Uterus (tissue), 4 donors: ENCODE measurements at regions of chr22 and their contacts with region 1.

Region 1: DNA sequence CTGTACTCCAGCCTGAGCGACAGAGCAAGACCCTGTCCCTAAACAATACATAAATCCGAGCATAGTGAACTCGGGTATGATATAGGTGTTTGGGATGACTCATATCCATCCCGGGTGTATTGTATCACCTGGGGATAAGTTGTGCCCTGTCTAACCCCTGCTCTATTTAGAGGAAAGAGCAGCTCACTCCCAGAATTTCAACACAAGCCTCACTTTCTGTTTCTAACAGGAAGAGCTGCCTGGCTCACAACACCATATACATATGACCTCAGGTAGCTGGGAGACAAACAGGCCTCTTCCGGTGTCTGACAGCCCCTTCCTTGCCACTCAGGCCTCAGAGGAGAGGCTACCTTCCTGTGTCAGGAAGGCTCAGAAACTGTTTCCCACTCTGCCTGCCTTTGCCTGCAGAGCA is 9.9 kb upstream of the MICALL1 start:
- DNase-seq: no peak
- H3K4me3 ChIP-seq: no peak overlapping the region
- H3K27ac ChIP-seq: peak overlapping the region; percentile 71 to 74
- H3K4me1 ChIP-seq: peaks cover 6 to 8% of the 10 kb centered on the region in 2 donors
- H3K27me3 ChIP-seq: no peaks in the 10 kb centered on the region
- CTCF ChIP-seq: no peak
- POLR2A ChIP-seq: no peak

Region 2: GRCh38 chr22:37862570-37863325 is 33.4 kb before region 1 on chr22:
- intact Hi-C with region 1: no loop called
- DNase-seq: no peak
- H3K4me3 ChIP-seq: no peak overlapping the region
- H3K27ac ChIP-seq: no peak overlapping the region
- H3K4me1 ChIP-seq: no peaks in the 10 kb centered on the region
- H3K27me3 ChIP-seq: no peaks in the 10 kb centered on the region
- CTCF ChIP-seq: no peak
- POLR2A ChIP-seq: no peak

Region 3: GRCh38 chr22:37933711-37934376 is 37.7 kb after region 1 on chr22:
- intact Hi-C with region 1: loop called (anchors 5 kb)
- DNase-seq: peak; percentile 86 to 90
- H3K4me3 ChIP-seq: no peak overlapping the region
- H3K27ac ChIP-seq: peak overlapping the region; percentile 60 to 68
- H3K4me1 ChIP-seq: peaks cover 0 to 11% of the 10 kb centered on the region in 2 donors
- H3K27me3 ChIP-seq: no peaks in the 10 kb centered on the region
- CTCF ChIP-seq: peak; percentile 97 to 99 (median 98)
- POLR2A ChIP-seq: no peak

Region 4: GRCh38 chr22:38941488-38941987 is 1045.4 kb after region 1 on chr22:
- intact Hi-C with region 1: no loop called
- DNase-seq: no peak
- H3K4me3 ChIP-seq: no peak overlapping the region
- H3K27ac ChIP-seq: no peak overlapping the region
- H3K4me1 ChIP-seq: no peaks in the 10 kb centered on the region
- H3K27me3 ChIP-seq: no peaks in the 10 kb centered on the region
- CTCF ChIP-seq: no peak
- POLR2A ChIP-seq: no peak